ENCODE measurements at regions of chr18 and their contacts with region 1.

Region 1: GRCh38 chr18:62425465-62426195 is 97.2 kb upstream of the ZCCHC2 start:
- DNase-seq: peak; percentile 85

Region 2: DNA sequence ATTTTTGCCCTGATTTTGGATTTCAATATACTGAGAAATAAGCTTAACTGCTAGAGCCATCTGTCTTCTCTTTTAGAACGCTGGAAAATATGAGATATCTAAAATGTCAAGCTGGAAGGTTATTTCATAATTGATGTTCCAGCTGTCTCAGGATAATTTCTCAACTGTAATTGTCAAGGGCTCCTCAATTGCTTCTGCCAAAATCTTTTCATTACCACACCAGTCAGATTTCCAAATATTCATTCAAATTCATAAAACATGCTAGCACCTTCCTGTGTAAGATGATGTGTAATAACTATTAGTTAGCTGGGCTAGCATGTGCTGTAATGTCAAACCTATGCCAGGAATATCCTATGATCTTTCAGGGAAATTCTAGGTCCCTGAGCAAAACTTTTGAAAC is 12.4 kb before region 1 on chr18:
- intact Hi-C with region 1: no loop called
- DNase-seq: no peak

Region 3: GRCh38 chr18:62522504-62523254 is 97.0 kb after region 1 on chr18 and contains the start of gene ZCCHC2:
- intact Hi-C with region 1: loop called (anchors 2 to 5 kb)
- DNase-seq: peak; percentile 100
- total RNA-seq, gene ZCCHC2: 25.0 to 26.3 TPM